ENCODE measurements at regions of chr19 and their contacts with region 1.

Region 1: GRCh38 chr19:4471403-4472173 is 509 bp upstream of the HDGFL2 start:
- DNase-seq: peak; percentile 100
- ATAC-seq: peak; percentile 89
- H3K4me3 ChIP-seq: peak overlapping the region; percentile 98
- H3K27ac ChIP-seq: peak overlapping the region; percentile 49
- H3K4me1 ChIP-seq: peaks cover 13% of the 10 kb centered on the region; the same call in 1 of the 2 replicates
- H3K27me3 ChIP-seq: no peaks in the 10 kb centered on the region
- CTCF ChIP-seq: no peak

Region 2: GRCh38 chr19:4457654-4458395 is 13.8 kb before region 1 on chr19 and contains the start of gene UBXN6:
- CTCF ChIA-PET with region 1: no interaction called
- POLR2A ChIA-PET with region 1: interaction called, 14 read pairs
- intact Hi-C with region 1: no loop called
- DNase-seq: peak; percentile 94
- ATAC-seq: peak; percentile 83
- H3K4me3 ChIP-seq: peak within 1 kb of the TSS; percentile 81
- H3K27ac ChIP-seq: peak within 1 kb of the TSS; percentile 5; the same call in 1 of the 2 replicates
- H3K4me1 ChIP-seq: no peaks in the 10 kb centered on the region; the same call in 1 of the 2 replicates
- H3K27me3 ChIP-seq: no peaks in the 10 kb centered on the region
- CTCF ChIP-seq: no peak
- total RNA-seq, gene UBXN6: 64.0 and 86.1 TPM in 2 replicates

Region 3: DNA sequence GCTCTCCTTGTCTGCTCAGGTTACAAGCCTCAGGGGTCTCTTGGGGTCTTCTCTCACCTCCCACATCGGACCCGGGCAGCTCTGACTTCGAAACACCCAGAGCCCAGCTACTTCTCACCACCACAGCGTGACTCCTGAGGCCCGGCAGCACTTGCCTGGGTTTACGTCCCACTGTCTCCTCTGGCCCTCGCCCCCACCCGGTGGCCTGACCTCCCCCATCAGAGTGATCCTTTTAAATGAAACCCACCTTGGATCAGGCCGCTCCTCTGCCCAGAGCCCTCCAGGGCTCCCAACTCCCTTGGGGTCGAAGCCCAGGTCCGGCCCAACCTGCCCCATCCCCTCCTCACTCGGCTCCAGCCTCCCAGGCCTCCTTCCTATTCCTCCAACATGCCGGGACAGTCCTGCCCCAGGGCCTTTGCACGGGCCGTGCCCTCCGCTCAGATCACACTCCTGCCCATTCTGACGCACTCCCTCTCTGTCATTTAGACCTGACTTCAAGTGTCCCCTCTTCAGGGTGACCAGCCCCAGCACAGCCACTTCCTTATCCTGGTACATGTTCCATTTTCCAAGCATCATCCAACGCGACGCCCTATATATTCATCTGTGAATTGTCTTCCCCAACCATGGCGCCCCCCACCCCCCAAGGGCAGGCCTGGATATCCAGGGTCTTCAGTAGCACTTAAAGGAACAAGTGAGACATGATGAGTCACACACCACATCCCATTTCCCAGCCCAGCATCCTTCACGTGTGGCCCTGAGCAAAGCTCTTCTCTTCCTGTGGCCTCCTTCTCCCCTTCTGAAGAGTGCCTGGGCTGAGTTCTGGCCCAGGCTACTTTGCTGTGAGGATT is 34.5 kb after region 1 on chr19:
- CTCF ChIA-PET with region 1: no interaction called
- POLR2A ChIA-PET with region 1: no interaction called
- intact Hi-C with region 1: no loop called
- DNase-seq: peak; percentile 70
- ATAC-seq: peak; percentile 71
- H3K4me3 ChIP-seq: no peak overlapping the region
- H3K27ac ChIP-seq: 0 out of 2 replicates have a peak overlapping the region, but pooled peaks have one; percentile 3
- H3K4me1 ChIP-seq: peaks cover 8% of the 10 kb centered on the region
- H3K27me3 ChIP-seq: no peaks in the 10 kb centered on the region
- CTCF ChIP-seq: no peak

Region 4: GRCh38 chr19:4518345-4519171 is 47.0 kb after region 1 on chr19 and contains the start of gene PLIN4:
- CTCF ChIA-PET with region 1: no interaction called
- POLR2A ChIA-PET with region 1: interaction called, 4 read pairs
- intact Hi-C with region 1: loop called (anchors 5 kb)
- DNase-seq: peak; percentile 89
- ATAC-seq: peak; percentile 92
- H3K4me3 ChIP-seq: peak within 1 kb of the TSS; percentile 49; the same call in 1 of the 2 replicates
- H3K27ac ChIP-seq: peak within 1 kb of the TSS; percentile 62
- H3K4me1 ChIP-seq: peaks cover 25% of the 10 kb centered on the region
- H3K27me3 ChIP-seq: no peaks in the 10 kb centered on the region
- CTCF ChIP-seq: no peak
- total RNA-seq, gene PLIN4: 9.1 and 9.8 TPM in 2 replicates